GM12878 (cell line): ENCODE measurements at regions of chr2 and their contacts with region 1.

Region 1: GRCh38 chr2:37376421-37377186 is 32.2 kb downstream of the QPCT start:
- DNase-seq: peak; percentile 78
- ATAC-seq: peak; percentile 96
- H3K4me3 ChIP-seq: peak overlapping the region; percentile 41; the same call in 1 of the 2 replicates
- H3K27ac ChIP-seq: peak overlapping the region; percentile 43; the same call in 1 of the 2 replicates
- H3K4me1 ChIP-seq: peaks cover 24% of the 10 kb centered on the region
- H3K27me3 ChIP-seq: peaks cover 0 to 14% of the 10 kb centered on the region in 2 experiments; a peak in 1 of 4 replicates
- CTCF ChIP-seq: no peak
- EP300 ChIP-seq: peak; percentile 93 to 97; a peak in 3 of 4 replicates
- POLR2A ChIP-seq: no peak
- RAD21 ChIP-seq: no peak

Region 2: GRCh38 chr2:37324786-37325624 is 51.6 kb before region 1 on chr2 and contains the start of gene PRKD3:
- CTCF ChIA-PET with region 1: interaction called, 3 read pairs
- POLR2A ChIA-PET with region 1: no interaction called
- RAD21 ChIA-PET with region 1: interaction called, 6 read pairs
- SMC1A ChIA-PET with region 1: interaction called, 5 read pairs
- in situ Hi-C with region 1: no loop called
- intact Hi-C with region 1: loop called (anchors 5 kb)
- DNase-seq: no peak
- ATAC-seq: peak; percentile 79
- H3K4me3 ChIP-seq: peak within 1 kb of the TSS; percentile 69
- H3K27ac ChIP-seq: peak within 1 kb of the TSS; percentile 35
- H3K4me1 ChIP-seq: peaks cover 3% of the 10 kb centered on the region; the same call in 1 of the 2 replicates
- H3K27me3 ChIP-seq: peaks cover 2 to 6% of the 10 kb centered on the region in 2 experiments
- CTCF ChIP-seq: no peak
- EP300 ChIP-seq: no peak
- POLR2A ChIP-seq: no peak
- RAD21 ChIP-seq: no peak
- polyA plus RNA-seq, gene PRKD3: 3.3 to 3.7 TPM

Region 3: GRCh38 chr2:37481244-37481643 is 104.6 kb after region 1 on chr2:
- CTCF ChIA-PET with region 1: no interaction called
- POLR2A ChIA-PET with region 1: no interaction called
- RAD21 ChIA-PET with region 1: no interaction called
- SMC1A ChIA-PET with region 1: no interaction called
- in situ Hi-C with region 1: no loop called
- intact Hi-C with region 1: no loop called
- DNase-seq: no peak
- ATAC-seq: no peak
- H3K4me3 ChIP-seq: no peak overlapping the region
- H3K27ac ChIP-seq: no peak overlapping the region
- H3K4me1 ChIP-seq: no peaks in the 10 kb centered on the region
- H3K27me3 ChIP-seq: no peaks in the 10 kb centered on the region
- CTCF ChIP-seq: no peak
- EP300 ChIP-seq: no peak
- POLR2A ChIP-seq: no peak
- RAD21 ChIP-seq: no peak

Region 4: GRCh38 chr2:37934591-37935513 is 558.2 kb after region 1 on chr2:
- CTCF ChIA-PET with region 1: interaction called, 4 read pairs
- POLR2A ChIA-PET with region 1: no interaction called
- RAD21 ChIA-PET with region 1: interaction called, 10 read pairs
- SMC1A ChIA-PET with region 1: no interaction called
- in situ Hi-C with region 1: no loop called
- intact Hi-C with region 1: no loop called
- DNase-seq: peak; percentile 41
- ATAC-seq: peak; percentile 94
- H3K4me3 ChIP-seq: peak overlapping the region; percentile 69
- H3K27ac ChIP-seq: peak overlapping the region; percentile 93
- H3K4me1 ChIP-seq: peaks cover 15% of the 10 kb centered on the region
- H3K27me3 ChIP-seq: no peaks in the 10 kb centered on the region
- CTCF ChIP-seq: no peak
- EP300 ChIP-seq: peak; percentile 62 to 84
- POLR2A ChIP-seq: no peak
- RAD21 ChIP-seq: peak; percentile 27